Transverse colon (tissue), 4 donors: ENCODE measurements at regions of chr20 and their contacts with region 1.

Region 1: GRCh38 chr20:16049529-16050093 is 523.6 kb downstream of the KIF16B start:
- DNase-seq: no peak
- H3K4me3 ChIP-seq: no peak overlapping the region
- H3K27ac ChIP-seq: no peak overlapping the region
- H3K4me1 ChIP-seq: no peaks in the 10 kb centered on the region
- H3K27me3 ChIP-seq: no peaks in the 10 kb centered on the region
- CTCF ChIP-seq: no peak
- EP300 ChIP-seq: no peak
- POLR2A ChIP-seq: no peak

Region 2: DNA sequence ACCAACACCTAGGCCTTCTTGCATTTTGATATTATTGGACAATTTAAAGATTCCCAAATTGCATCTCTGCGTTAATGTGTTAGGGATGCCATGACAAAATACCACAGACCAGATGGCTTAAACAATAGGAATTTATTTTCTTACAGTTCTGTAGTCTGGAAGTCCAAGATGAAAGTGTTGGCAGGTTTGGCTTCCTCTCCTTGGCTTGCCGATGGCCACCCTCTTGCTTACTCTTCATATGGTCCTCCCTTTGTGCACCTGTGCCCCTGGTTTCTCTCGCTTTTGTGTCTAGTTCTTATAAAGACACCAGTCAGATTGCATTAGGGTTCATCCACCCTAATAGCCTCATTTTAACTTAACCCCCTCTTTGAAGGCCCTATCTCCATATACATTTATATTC is 869.8 kb before region 1 on chr20:
- in situ Hi-C with region 1: no loop called
- intact Hi-C with region 1: loop called (anchors 5 kb)
- DNase-seq: no peak
- H3K4me3 ChIP-seq: no peak overlapping the region
- H3K27ac ChIP-seq: no peak overlapping the region
- H3K4me1 ChIP-seq: no peaks in the 10 kb centered on the region
- H3K27me3 ChIP-seq: no peaks in the 10 kb centered on the region
- CTCF ChIP-seq: no peak
- EP300 ChIP-seq: no peak
- POLR2A ChIP-seq: no peak